PC-3 (cell line): ENCODE measurements at regions of chr16 and their contacts with region 1.

Region 1: DNA sequence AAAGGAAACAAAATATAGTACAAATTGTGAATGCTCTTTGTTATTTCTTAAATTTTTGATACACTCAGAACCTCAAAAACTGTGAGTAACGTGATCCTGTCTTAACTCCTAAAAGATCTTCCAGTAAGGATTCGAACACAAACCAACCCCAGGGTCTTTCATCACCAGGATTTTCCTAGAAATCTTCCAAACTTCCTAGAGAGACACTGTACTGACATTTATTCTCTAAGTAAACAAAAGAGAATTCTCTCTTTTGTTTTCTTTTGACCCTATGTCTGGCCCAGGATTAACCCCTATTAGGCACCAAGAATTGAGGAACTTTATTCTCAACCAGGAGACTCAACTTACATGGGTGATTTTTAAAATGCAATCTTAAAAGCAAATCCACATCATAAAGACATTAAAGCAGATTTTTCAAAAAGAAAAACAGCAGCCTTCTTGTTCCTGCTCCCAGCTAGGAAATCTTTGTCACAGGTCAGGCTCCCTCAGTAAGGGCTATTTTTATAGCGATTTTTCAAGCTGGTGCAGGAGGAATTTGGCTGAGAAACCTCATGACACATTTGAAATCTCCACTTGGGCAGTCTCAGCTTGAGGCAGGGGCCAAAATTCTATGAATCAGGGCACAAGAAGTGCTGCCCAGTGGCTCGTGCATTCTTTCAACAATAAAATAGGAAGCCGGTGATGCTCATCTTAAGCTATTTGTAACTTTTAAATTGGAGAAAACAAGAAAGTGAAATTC is 6.2 kb upstream of the SMG1 start:
- DNase-seq: peak; percentile 22
- ATAC-seq: peak; percentile 43
- H3K4me3 ChIP-seq: no peak overlapping the region
- H3K27ac ChIP-seq: no peak overlapping the region
- H3K4me1 ChIP-seq: no peaks in the 10 kb centered on the region
- H3K27me3 ChIP-seq: no peaks in the 10 kb centered on the region
- CTCF ChIP-seq: no peak

Region 2: DNA sequence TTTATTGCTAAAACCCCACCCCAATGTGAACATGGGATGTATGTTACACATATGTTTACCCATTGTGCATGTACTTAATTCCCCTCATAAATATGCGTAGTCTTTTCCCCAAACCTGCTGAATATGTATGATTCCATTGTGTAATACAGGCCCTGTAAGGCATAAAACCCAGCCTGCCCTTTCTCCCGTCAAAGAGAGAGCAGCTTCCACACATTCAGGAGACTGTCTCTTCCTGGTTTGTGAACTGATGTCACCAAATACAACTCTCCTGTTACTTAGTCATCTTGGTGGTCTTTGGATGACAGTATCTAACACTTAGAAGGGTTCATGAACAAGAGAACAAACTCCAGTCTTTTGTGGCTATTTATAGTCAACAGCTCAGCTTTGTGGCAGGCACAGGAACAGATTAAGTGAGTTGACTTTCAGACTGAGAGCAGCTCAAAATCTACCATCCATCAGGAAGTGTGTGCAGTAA is 26.7 kb after region 1 on chr16:
- CTCF ChIA-PET with region 1: interaction called, 10 read pairs
- POLR2A ChIA-PET with region 1: no interaction called
- intact Hi-C with region 1: no loop called
- DNase-seq: no peak
- ATAC-seq: no peak
- H3K4me3 ChIP-seq: no peak overlapping the region
- H3K27ac ChIP-seq: no peak overlapping the region
- H3K4me1 ChIP-seq: no peaks in the 10 kb centered on the region
- H3K27me3 ChIP-seq: no peaks in the 10 kb centered on the region
- CTCF ChIP-seq: no peak

Region 3: GRCh38 chr16:18969050-18969854 is 36.8 kb after region 1 on chr16:
- CTCF ChIA-PET with region 1: no interaction called
- POLR2A ChIA-PET with region 1: no interaction called
- intact Hi-C with region 1: loop called (anchors 5 kb)
- DNase-seq: peak; percentile 78
- ATAC-seq: peak; percentile 94
- H3K4me3 ChIP-seq: peak overlapping the region; percentile 65
- H3K27ac ChIP-seq: no peak overlapping the region
- H3K4me1 ChIP-seq: no peaks in the 10 kb centered on the region
- H3K27me3 ChIP-seq: no peaks in the 10 kb centered on the region
- CTCF ChIP-seq: peak; percentile 87